CD4-positive, alpha-beta memory T cell (primary cell): ENCODE measurements at regions of chr17 and their contacts with region 1.

Region 1: DNA sequence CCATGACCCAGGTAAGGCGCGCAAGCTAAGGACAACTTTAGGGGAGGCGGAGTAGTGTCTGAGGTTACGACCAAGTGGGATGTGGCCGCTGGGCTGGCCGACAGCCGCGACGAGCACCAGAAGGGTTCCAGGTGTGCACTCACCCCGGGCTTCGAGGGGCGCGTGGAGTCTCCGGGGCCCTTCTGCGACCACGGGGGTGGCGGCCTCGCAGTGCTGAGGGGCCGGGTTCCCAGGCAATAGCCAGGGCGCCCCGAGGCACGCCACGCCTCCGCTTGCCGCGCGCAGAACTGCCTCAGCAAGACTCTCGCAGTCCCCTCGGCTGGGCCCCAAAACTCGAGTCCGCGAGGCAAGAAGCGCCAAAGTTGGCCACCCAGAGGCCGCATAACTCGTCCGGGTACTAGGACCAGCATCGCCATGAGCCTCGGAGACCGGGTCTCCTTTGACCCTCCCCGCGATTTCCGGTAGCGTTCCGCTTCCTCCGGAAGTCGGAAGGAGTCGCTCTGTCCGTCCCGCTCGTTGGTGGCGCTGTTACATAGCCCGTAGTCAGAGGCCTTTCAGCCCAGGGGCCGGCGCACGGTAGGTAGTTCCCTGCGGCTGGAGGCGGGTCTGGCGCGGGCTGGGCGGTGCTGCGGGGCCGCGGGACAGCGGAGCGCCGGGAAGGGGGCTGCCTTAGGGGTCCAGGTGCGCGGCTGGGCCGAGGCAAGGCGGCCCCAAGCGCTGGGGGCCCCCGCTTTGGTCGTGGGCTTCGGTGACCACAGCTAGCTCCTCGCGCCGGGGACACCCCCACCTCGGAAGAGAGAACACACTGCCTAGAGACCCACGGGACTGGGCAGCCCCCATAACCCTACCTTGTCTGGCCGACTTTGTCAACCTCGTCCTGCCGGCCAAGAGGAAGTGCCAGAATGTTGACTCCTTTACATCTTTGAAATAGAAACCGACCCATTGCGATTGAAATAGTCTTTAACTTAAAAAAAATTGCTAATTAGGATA is at the starts of genes ADPRM and SCO1:
- DNase-seq: peak; percentile 86 to 91 (median 87)
- H3K4me3 ChIP-seq: peak within 1 kb of the TSS; percentile 80 to 95
- H3K4me3 Mint-ChIP-seq: peak within 1 kb of the TSS; percentile 91 to 98 (median 97)
- H3K27ac ChIP-seq: peak within 1 kb of the TSS; percentile 96
- H3K27ac Mint-ChIP-seq: peak within 1 kb of the TSS; percentile 91 to 98 (median 94)
- H3K4me1 ChIP-seq: peaks cover 55% of the 10 kb centered on the region
- H3K4me1 Mint-ChIP-seq: peaks cover 37 to 71% (median 54%) of the 10 kb centered on the region in 4 donors
- H3K27me3 ChIP-seq: no peaks in the 10 kb centered on the region
- H3K27me3 Mint-ChIP-seq: no peaks in the 10 kb centered on the region
- total RNA-seq, gene ADPRM: 45.5 to 46.7 TPM
- total RNA-seq, gene SCO1: 26.0 to 26.1 TPM

Region 2: DNA sequence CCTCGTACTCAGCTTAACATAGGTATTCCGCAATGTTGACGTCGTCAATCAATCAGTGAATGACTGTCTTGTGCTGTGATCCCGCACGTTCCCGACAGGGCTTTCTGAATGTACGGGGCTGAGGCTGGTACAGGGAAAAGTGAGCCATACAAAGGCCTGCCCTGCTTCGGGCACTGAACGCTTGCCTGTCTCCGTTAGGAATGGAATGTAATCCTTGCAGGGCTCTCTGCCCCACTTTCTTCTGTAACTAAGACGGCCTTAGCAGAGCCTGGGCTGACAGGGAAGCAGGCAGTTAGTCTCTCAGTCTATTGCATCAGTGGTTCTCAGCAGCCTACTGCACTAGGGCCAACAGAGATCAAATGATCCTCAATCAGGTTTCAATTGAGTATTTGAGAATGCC is 24.1 kb before region 1 on chr17:
- CTCF ChIA-PET with region 1: no interaction called
- POLR2A ChIA-PET with region 1: no interaction called
- intact Hi-C with region 1: no loop called
- DNase-seq: no peak
- H3K4me3 ChIP-seq: no peak overlapping the region
- H3K4me3 Mint-ChIP-seq: no peak overlapping the region
- H3K27ac ChIP-seq: no peak overlapping the region
- H3K27ac Mint-ChIP-seq: no peak overlapping the region
- H3K4me1 ChIP-seq: no peaks in the 10 kb centered on the region
- H3K4me1 Mint-ChIP-seq: no peaks in the 10 kb centered on the region
- H3K27me3 ChIP-seq: no peaks in the 10 kb centered on the region
- H3K27me3 Mint-ChIP-seq: no peaks in the 10 kb centered on the region

Region 3: DNA sequence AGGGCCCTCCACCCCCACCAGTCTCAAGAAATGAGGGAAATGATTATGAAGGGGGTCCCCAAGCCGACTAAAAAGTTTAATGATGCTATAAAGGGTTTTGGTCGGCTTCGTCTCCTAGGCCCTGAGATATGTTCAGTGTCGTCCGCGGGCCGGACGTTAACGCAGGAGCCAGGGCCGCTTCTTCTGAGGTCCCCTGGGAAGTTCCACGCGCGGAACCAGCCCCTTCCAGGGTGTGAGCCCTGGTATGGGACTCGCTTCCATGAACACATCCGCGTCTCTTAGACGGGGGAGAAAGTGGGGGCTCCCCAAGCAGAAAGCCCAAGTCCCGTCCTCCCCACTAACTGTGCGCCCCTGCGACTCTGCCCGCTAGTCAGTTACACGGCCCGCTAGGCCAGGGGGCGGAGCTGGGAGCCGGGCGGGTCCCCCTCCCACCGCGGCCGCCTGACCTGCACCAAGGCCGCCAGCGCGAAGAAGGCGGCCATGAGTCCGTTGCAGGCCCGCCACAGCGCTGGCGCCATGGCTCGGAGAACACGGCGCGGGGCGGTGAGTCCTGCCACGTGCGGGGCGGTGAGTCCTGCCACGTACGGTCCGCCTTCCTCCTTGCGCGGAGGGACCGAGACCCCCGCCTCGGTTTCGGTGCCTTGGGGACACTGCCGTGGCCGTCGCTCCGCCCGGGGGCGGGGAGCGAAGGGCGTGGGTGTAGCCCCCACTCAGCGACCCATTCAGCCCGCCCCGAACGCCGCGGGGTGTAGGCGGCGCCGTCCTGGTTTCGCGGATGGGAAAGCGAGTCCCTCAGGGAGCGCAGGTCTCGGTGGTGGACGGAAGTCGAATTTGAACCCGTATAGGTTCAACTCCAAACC is 32.2 kb after region 1 on chr17 and contains the start of gene TMEM220:
- CTCF ChIA-PET with region 1: interaction called, 4 read pairs
- POLR2A ChIA-PET with region 1: interaction called, 5 read pairs
- intact Hi-C with region 1: loop called (anchors 1 kb)
- DNase-seq: peak in 4 of 5 donors; percentile 17 to 22 (median 19)
- H3K4me3 ChIP-seq: peak within 1 kb of the TSS; percentile 22 to 46
- H3K4me3 Mint-ChIP-seq: peak within 1 kb of the TSS; percentile 87 to 93 (median 91)
- H3K27ac ChIP-seq: no peak within 1 kb of the TSS
- H3K27ac Mint-ChIP-seq: peak within 1 kb of the TSS in 6 of 7 donors; percentile 38 to 90 (median 72)
- H3K4me1 ChIP-seq: no peaks in the 10 kb centered on the region
- H3K4me1 Mint-ChIP-seq: peaks cover 3 to 20% (median 6%) of the 10 kb centered on the region in 4 donors
- H3K27me3 ChIP-seq: no peaks in the 10 kb centered on the region
- H3K27me3 Mint-ChIP-seq: peaks cover 0 to 2% of the 10 kb centered on the region in 2 donors
- total RNA-seq, gene TMEM220: 1.8 to 3.0 TPM